ENCODE measurements at regions of chr2 and their contacts with region 1.

Region 1: DNA sequence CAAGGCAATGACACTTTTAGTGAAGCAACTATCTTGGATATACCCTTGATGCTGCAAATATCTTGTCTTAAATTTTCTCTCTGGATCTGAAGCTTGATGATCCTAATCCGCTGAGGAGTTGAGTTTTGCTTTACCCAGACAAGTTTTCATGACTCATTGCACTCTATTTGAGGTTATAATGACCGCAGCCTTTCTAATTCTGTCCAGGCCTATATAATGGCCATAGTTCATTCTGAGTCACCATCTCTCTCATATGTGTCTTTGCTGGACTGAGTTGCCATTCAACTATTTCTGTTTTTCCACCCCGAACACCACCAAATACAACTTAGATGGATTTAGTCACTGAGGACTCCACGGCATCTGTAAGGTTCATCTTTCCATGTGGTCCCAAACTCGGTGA is 802.1 kb upstream of the FAM98A start:
- DNase-seq: no peak
- H3K4me3 ChIP-seq: no peak overlapping the region
- CTCF ChIP-seq: no peak
- POLR2A ChIP-seq: no peak

Region 2: GRCh38 chr2:34419856-34420255 is 18.7 kb after region 1 on chr2:
- intact Hi-C with region 1: loop called (anchors 1 kb)
- DNase-seq: no peak
- H3K4me3 ChIP-seq: no peak overlapping the region
- CTCF ChIP-seq: no peak
- POLR2A ChIP-seq: no peak

Measured in lower leg skin (tissue), 4 donors.